PC-9 (cell line): ENCODE measurements at regions of chr2 and their contacts with region 1.

Region 1: GRCh38 chr2:28621172-28622100 is 125.6 kb downstream of the PLB1 start:
- DNase-seq: peak; percentile 75 to 98
- H3K4me3 ChIP-seq: peak overlapping the region; percentile 28; the same call in 1 of the 2 replicates
- H3K27ac ChIP-seq: peak overlapping the region; percentile 88
- H3K4me1 ChIP-seq: peaks cover 82% of the 10 kb centered on the region
- H3K27me3 ChIP-seq: no peaks in the 10 kb centered on the region
- CTCF ChIP-seq: peak; percentile 79

Region 2: DNA sequence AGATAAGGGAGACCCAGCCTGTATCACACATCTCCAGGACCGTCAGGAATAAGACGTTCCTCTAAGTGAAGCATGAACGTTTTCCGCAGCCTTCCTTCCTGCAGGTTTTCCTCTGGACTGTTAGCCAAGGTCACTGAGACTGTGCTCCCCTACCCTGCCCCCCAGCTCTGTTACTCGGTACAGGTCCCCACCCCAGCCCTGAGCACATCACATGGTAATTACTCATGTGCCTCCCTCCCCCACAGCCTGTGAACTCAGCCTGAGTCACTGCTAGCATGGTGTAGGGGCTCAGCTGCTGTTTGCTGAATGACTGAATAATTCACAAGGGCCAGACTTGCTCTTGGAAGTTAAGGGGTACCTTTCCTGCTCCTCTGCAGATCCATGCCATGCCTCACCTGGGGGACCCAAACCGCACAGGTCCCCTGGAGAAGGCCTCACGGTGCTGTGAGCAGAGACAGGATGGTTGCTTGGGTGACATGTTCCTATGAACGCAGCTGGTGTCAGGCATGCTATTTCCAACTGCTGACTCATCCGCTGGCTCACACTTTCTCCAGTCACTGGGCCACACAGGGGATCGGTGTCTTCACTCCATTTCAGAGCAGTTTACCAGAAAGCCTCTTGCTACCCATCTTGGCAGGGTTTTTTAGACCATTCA is 37.4 kb before region 1 on chr2:
- CTCF ChIA-PET with region 1: no interaction called
- POLR2A ChIA-PET with region 1: no interaction called
- intact Hi-C with region 1: loop called (anchors 5 kb)
- DNase-seq: peak; percentile 83 to 91
- H3K4me3 ChIP-seq: peak overlapping the region; percentile 42; the same call in 1 of the 2 replicates
- H3K27ac ChIP-seq: peak overlapping the region; percentile 89
- H3K4me1 ChIP-seq: peaks cover 36% of the 10 kb centered on the region
- H3K27me3 ChIP-seq: no peaks in the 10 kb centered on the region
- CTCF ChIP-seq: no peak

Region 3: GRCh38 chr2:28610583-28611201 is 10.7 kb before region 1 on chr2:
- CTCF ChIA-PET with region 1: no interaction called
- POLR2A ChIA-PET with region 1: interaction called, 3 read pairs
- intact Hi-C with region 1: loop called (anchors 1 kb)
- DNase-seq: peak; percentile 91 to 99
- H3K4me3 ChIP-seq: no peak overlapping the region
- H3K27ac ChIP-seq: peak overlapping the region; percentile 83
- H3K4me1 ChIP-seq: peaks cover 59% of the 10 kb centered on the region
- H3K27me3 ChIP-seq: no peaks in the 10 kb centered on the region
- CTCF ChIP-seq: no peak

Region 4: GRCh38 chr2:28643911-28644334 is 22.5 kb after region 1 on chr2:
- CTCF ChIA-PET with region 1: interaction called, 3 read pairs
- POLR2A ChIA-PET with region 1: no interaction called
- intact Hi-C with region 1: loop called (anchors 2 kb)
- DNase-seq: peak; percentile 48 to 92
- H3K4me3 ChIP-seq: peak overlapping the region; percentile 24; the same call in 1 of the 2 replicates
- H3K27ac ChIP-seq: peak overlapping the region; percentile 90
- H3K4me1 ChIP-seq: peaks cover 71% of the 10 kb centered on the region
- H3K27me3 ChIP-seq: no peaks in the 10 kb centered on the region
- CTCF ChIP-seq: no peak

Region 5: GRCh38 chr2:28661589-28662001 is 40.2 kb after region 1 on chr2:
- CTCF ChIA-PET with region 1: interaction called, 6 read pairs
- POLR2A ChIA-PET with region 1: no interaction called
- intact Hi-C with region 1: loop called (anchors 1 kb)
- DNase-seq: peak; percentile 58 to 75
- H3K4me3 ChIP-seq: no peak overlapping the region
- H3K27ac ChIP-seq: peak overlapping the region; percentile 73
- H3K4me1 ChIP-seq: peaks cover 72% of the 10 kb centered on the region
- H3K27me3 ChIP-seq: no peaks in the 10 kb centered on the region
- CTCF ChIP-seq: no peak

Region 6: DNA sequence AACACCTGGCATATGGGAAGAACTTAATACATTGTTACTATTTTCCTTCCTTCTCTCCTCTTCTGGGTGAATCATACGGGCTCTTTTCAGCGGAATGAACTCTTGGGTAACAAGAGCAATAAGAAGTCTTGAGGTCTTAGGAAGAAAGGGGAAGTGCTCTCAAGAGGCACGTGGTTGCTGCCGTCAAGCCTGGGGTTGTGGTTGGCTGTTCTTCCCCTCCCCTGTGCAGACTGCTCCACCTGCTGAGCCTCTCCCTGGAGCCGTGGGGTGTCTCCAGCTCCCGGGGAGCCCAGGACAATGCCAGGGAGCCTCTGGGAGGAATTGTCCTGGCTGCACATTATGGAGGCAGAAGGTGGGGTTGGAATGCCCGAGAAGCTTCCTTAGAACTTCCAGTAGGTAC is 379.0 kb after region 1 on chr2:
- CTCF ChIA-PET with region 1: no interaction called
- POLR2A ChIA-PET with region 1: no interaction called
- intact Hi-C with region 1: no loop called
- DNase-seq: no peak
- H3K4me3 ChIP-seq: no peak overlapping the region
- H3K27ac ChIP-seq: no peak overlapping the region
- H3K4me1 ChIP-seq: no peaks in the 10 kb centered on the region
- H3K27me3 ChIP-seq: no peaks in the 10 kb centered on the region
- CTCF ChIP-seq: no peak